PC-3 (cell line): ENCODE measurements at regions of chr3 and their contacts with region 1.

Region 1: DNA sequence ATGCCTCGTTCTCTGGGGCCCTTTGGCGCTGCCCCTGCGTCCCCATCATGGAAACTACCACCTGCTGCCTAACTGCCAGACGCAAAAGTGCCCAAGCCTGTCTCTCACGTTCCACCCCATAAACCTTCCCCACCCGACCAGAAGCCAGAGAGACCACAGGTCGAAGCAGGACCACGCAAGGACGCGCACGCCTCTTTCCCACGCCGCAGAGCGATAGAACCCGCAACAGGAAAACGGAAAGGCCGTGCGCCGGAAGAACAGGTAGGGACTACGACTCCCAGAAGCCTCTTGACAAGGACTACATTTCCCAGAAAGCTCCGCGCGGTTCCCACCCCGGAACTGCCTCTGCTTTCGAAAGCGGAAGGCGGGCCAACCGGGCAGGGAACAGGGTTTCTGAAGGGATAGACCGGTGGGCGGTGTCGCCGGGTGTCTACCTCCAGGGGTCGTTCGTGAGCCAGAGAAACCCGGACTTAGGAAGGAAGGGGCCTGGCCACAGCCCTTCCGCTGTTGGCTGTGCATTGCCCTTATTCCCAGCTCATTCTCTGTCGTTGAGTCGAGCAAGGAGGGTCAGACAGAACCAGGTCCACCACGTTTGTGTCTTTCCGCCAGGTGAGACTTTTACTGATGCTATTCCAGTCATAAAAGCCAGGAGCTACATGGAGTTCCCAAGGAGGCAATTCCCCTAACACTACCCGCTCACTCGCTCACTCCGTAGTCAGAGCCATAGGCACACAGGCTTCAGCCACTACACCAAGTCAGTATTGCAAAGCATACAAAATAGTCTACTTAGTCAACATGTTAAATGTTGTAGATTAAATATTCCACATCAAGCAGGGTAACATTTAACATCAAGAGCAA is 56.6 kb upstream of the ZBTB38 start:
- DNase-seq: peak; percentile 95
- ATAC-seq: peak; percentile 98
- H3K4me3 ChIP-seq: peak overlapping the region; percentile 78
- H3K27ac ChIP-seq: peak overlapping the region; percentile 37
- H3K4me1 ChIP-seq: peaks cover 9% of the 10 kb centered on the region; the same call in 1 of the 2 replicates
- H3K27me3 ChIP-seq: no peaks in the 10 kb centered on the region
- CTCF ChIP-seq: peak; percentile 68

Region 2: DNA sequence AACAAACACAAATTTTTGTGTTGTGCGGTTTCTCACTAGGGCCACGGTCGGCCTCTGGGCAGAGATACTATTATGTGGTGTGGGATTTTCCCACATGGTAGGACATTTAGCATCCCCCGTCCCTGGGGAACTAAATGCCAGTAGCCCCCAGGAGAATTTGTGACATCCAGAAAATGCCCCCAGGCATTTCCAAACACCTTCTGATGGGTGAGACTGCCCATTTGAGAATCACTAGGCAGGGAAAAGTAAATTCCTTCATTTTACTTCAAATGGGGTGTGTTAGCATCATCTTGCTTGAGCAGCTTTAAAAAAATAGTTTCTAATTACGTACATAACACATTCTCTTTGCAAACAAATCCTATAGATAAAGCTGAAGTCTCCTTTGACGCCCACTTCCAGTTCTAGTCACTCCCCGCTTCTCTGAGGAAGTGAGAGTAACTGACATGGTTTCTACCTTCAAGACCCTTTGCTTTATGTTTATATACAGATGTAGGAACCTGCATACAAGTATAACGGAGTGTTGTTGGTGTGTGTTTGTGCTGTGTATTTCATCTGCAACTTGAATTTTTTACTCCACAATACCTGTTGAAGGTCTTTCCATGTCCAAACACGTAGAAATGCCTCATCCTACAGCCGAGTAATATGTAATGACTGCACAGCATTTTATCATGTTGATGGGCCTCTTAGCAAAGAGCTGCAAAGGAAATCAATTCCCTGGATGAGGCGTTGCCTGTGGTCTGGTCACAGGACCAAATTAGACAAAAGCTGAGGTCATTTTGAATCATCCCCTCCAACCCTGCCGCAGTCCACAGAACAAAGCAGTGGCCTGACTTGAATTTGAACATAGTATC is 25.2 kb after region 1 on chr3:
- CTCF ChIA-PET with region 1: no interaction called
- POLR2A ChIA-PET with region 1: no interaction called
- intact Hi-C with region 1: no loop called
- DNase-seq: peak; percentile 72
- ATAC-seq: peak; percentile 91
- H3K4me3 ChIP-seq: no peak overlapping the region
- H3K27ac ChIP-seq: peak overlapping the region; percentile 60
- H3K4me1 ChIP-seq: peaks cover 23% of the 10 kb centered on the region
- H3K27me3 ChIP-seq: no peaks in the 10 kb centered on the region
- CTCF ChIP-seq: no peak

Region 3: GRCh38 chr3:141368062-141368924 is 56.6 kb after region 1 on chr3 and contains the start of gene ZBTB38:
- CTCF ChIA-PET with region 1: interaction called, 3 read pairs
- POLR2A ChIA-PET with region 1: interaction called, 4 read pairs
- intact Hi-C with region 1: loop called (anchors 5 kb)
- DNase-seq: peak; percentile 89
- ATAC-seq: peak; percentile 69
- H3K4me3 ChIP-seq: peak within 1 kb of the TSS; percentile 56
- H3K27ac ChIP-seq: peak within 1 kb of the TSS; percentile 100
- H3K4me1 ChIP-seq: peaks cover 48% of the 10 kb centered on the region
- H3K27me3 ChIP-seq: no peaks in the 10 kb centered on the region
- CTCF ChIP-seq: no peak
- total RNA-seq, gene ZBTB38: 17.0 and 19.6 TPM in 2 replicates

Region 4: GRCh38 chr3:141452036-141452435 is 140.3 kb after region 1 on chr3:
- CTCF ChIA-PET with region 1: interaction called, 9 read pairs
- POLR2A ChIA-PET with region 1: interaction called, 3 read pairs
- intact Hi-C with region 1: loop called (anchors 1 kb)
- DNase-seq: peak; percentile 52
- ATAC-seq: peak; percentile 56
- H3K4me3 ChIP-seq: no peak overlapping the region
- H3K27ac ChIP-seq: no peak overlapping the region
- H3K4me1 ChIP-seq: peaks cover 20% of the 10 kb centered on the region
- H3K27me3 ChIP-seq: no peaks in the 10 kb centered on the region
- CTCF ChIP-seq: peak; percentile 68

Region 5: GRCh38 chr3:141561426-141562034 is 249.8 kb after region 1 on chr3:
- CTCF ChIA-PET with region 1: no interaction called
- POLR2A ChIA-PET with region 1: no interaction called
- intact Hi-C with region 1: loop called (anchors 2 kb)
- DNase-seq: peak; percentile 70
- ATAC-seq: 0 out of 2 replicates have a peak, but pooled peaks have one; percentile 24
- H3K4me3 ChIP-seq: no peak overlapping the region
- H3K27ac ChIP-seq: no peak overlapping the region
- H3K4me1 ChIP-seq: no peaks in the 10 kb centered on the region
- H3K27me3 ChIP-seq: no peaks in the 10 kb centered on the region
- CTCF ChIP-seq: peak; percentile 85

Region 6: DNA sequence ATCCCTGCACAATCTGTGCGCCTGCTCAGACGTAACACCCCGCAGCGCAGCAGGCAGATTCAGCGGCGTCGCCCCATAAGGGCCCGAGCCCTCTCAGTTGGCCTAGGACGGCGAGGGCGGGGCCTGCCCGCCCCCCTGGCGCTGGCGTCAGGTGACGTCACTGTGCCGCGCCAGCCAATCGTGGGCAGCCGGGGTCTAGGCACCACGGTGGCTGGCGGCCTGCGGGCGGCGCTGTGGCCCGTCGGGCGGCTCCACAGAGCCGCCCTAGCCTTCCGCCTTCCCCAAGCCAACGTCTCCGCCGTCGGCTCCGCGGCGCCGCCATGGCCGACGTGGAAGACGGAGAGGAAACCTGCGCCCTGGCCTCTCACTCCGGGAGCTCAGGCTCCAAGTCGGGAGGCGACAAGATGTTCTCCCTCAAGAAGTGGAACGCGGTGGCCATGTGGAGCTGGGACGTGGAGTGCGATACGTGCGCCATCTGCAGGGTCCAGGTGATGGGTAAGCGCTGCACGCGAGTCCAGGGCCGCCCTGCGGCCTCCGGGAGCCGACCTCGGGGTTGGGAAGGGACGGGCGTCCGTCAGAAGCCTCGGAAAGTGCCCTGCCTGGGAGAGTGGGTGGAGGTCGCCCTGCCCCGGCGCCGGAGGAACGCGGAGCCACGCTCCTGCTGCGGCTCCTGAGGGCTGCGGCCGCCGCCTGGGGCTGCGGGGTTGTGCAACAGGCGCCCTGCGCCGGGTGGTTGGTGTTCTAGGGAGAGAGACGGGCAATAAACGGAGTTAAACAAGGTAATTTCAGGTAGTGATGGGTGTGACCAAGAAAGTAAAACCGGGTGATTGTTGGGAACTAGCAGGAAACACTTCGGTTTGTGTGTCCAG is 426.5 kb after region 1 on chr3 and contains the start of gene RNF7:
- CTCF ChIA-PET with region 1: no interaction called
- POLR2A ChIA-PET with region 1: no interaction called
- intact Hi-C with region 1: loop called (anchors 2 kb)
- DNase-seq: peak; percentile 95
- ATAC-seq: peak; percentile 95
- H3K4me3 ChIP-seq: peak within 1 kb of the TSS; percentile 95
- H3K27ac ChIP-seq: peak within 1 kb of the TSS; percentile 74
- H3K4me1 ChIP-seq: peaks cover 19% of the 10 kb centered on the region
- H3K27me3 ChIP-seq: no peaks in the 10 kb centered on the region
- CTCF ChIP-seq: peak; percentile 71
- total RNA-seq, gene RNF7: 42.3 and 42.9 TPM in 2 replicates